Activated CD4-positive, alpha-beta memory T cell treated with anti-CD3 and anti-CD28 coated beads for 36 hours (primary cell): ENCODE measurements at regions of chr5 and their contacts with region 1.

Region 1: DNA sequence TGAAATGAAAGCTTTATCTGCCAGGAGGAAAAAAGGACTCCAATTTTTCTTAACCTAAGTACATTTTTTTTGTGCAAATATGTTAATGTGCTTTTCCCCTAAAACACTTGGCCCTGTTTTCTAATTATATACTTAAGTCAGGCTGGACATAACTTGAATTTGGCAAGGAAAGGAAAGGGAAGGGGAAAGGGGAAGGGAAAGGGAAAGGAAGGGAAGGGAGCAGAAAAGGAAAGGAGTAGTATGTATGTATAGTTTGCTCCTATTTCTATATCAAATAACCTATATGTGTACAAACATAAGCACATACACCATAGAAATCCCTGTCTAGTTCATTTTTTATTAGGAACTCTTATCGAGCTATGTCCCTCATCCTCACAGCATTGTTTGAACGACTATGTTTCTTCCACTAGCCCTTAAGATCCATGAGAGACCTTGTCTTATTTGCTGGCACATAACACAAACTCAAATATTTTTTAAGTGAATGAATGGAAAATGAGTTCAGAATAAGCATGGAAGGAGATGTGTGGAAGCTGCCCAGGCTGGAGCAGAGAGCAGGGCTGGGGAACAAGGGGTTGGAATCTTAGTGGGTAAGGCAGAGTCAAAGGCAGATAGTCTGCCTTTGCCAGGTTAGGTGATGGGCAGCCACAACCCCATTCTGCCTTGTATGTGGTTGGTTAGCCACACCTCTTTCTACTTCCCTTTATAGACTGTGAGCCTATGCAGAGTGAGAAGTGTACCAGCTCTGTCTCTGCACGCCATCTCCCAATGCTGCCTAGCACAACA is 70.0 kb downstream of the KLHL3 start:
- DNase-seq: peak; percentile 66
- H3K4me3 Mint-ChIP-seq: no peak overlapping the region
- H3K27ac Mint-ChIP-seq: peak overlapping the region; percentile 77
- H3K4me1 Mint-ChIP-seq: peaks cover 17% of the 10 kb centered on the region
- H3K27me3 Mint-ChIP-seq: no peaks in the 10 kb centered on the region

Region 2: DNA sequence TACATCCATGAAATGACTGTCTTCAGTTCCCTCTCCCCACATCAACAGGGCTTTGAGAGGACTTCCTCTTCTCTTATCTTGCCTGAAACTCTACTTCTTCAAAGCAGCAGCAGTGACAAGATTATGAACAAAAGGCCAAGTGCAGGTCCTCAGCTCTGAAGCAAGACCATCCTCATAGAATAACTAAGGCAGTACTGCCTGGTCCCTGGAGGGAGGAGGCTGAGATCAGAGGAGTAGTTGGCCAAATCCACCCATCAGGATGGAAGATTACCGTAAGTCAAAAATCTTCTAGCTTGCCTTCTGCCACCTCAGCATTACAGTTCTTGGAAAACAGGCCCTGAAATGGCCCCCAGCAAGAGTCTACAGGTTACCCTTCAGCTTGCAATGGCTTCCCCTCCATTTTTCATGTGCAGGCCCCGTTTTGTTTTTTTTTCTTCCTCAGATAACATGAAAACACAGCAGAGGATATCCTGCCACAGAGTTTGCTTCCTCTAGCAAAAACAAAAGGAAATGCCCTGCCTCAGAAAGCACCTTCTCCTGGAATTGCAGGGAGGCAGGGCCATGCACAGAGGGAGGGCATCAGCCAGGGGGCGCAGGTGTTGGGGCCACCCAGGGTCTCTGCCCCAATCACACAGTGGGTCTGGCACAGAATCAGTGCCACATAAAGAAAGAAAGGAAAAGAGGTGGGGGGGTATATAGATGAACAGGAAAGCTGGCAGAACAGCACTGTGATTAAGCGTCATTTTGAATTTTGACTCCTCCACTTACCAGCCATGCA is 30.0 kb after region 1 on chr5:
- CTCF ChIA-PET with region 1: interaction called, 29 read pairs
- POLR2A ChIA-PET with region 1: interaction called, 4 read pairs
- intact Hi-C with region 1: loop called (anchors 1 kb)
- DNase-seq: peak; percentile 29
- H3K4me3 Mint-ChIP-seq: peak overlapping the region; percentile 42
- H3K27ac Mint-ChIP-seq: peak overlapping the region; percentile 86
- H3K4me1 Mint-ChIP-seq: peaks cover 41% of the 10 kb centered on the region
- H3K27me3 Mint-ChIP-seq: no peaks in the 10 kb centered on the region

Region 3: DNA sequence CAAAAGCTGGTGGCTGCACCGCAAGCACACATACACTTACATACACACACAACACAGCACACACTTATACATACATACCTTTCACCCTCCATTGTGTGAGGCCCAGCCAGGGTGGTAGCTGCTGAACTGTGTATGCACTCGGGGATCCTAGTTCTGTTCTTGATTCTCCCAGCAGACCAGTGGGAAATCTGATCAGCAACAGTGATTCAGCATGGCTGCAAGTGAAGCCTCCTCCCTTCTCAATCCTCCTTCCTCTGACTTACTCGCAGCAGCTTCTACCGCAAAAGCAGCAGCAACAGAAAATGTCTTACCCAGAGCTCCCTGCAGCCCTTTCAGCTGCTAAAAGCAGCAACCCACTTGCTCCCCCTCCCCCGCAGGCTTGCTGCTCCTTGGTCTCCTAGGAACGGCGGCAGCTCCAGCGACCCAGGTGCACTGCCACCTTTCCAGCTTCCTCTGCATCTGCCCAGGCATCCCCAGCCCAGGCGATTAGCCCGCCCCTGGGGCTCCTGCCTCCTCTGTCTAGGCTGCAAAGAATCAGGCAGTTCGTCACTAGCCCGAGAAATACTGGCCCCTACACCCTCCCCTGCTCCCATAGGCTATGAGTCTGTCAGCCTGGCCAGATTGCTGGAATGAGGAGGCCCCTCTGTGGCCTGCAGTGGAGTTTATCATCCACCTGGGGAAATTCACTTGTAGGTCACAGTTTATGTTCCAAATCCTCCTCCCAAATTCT is 69.9 kb after region 1 on chr5 and contains the start of gene KLHL3:
- CTCF ChIA-PET with region 1: interaction called, 369 read pairs
- POLR2A ChIA-PET with region 1: interaction called, 5 read pairs
- intact Hi-C with region 1: no loop called
- DNase-seq: peak; percentile 50
- H3K4me3 Mint-ChIP-seq: no peak within 1 kb of the TSS
- H3K27ac Mint-ChIP-seq: no peak within 1 kb of the TSS
- H3K4me1 Mint-ChIP-seq: peaks cover 31% of the 10 kb centered on the region
- H3K27me3 Mint-ChIP-seq: no peaks in the 10 kb centered on the region
- total RNA-seq, gene KLHL3: 3.0 to 3.4 TPM

Region 4: DNA sequence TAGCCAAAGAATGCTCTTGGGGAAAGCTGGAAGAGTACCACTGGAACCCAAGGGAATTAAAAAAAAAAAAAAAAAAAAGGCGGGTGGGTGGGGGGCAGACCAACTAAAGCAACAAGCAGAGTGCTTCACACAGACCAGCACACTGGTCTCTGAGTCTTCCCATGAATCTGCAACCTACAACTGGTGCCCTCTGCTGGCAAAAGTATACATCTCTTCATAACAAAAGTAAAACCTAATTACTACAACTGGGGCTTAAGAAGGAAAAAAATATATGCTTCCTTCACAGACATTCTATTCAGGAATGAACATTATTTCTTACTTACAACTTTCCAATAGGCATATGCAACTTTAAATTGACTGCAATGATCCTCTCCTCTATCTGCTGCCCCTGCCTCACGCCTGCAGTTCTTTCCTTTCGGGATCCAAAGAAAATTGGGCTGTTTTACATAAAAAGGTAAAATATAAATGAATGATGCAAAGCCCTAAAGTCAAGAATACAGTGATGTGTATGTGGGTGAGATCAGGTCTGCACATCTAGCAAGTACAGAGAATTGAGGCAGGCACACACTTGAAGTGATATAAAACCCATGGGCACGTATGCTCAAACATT is 77.3 kb after region 1 on chr5:
- CTCF ChIA-PET with region 1: interaction called, 369 read pairs
- POLR2A ChIA-PET with region 1: interaction called, 7 read pairs
- intact Hi-C with region 1: no loop called
- DNase-seq: peak; percentile 57
- H3K4me3 Mint-ChIP-seq: no peak overlapping the region
- H3K27ac Mint-ChIP-seq: no peak overlapping the region
- H3K4me1 Mint-ChIP-seq: peaks cover 7% of the 10 kb centered on the region
- H3K27me3 Mint-ChIP-seq: no peaks in the 10 kb centered on the region

Region 5: DNA sequence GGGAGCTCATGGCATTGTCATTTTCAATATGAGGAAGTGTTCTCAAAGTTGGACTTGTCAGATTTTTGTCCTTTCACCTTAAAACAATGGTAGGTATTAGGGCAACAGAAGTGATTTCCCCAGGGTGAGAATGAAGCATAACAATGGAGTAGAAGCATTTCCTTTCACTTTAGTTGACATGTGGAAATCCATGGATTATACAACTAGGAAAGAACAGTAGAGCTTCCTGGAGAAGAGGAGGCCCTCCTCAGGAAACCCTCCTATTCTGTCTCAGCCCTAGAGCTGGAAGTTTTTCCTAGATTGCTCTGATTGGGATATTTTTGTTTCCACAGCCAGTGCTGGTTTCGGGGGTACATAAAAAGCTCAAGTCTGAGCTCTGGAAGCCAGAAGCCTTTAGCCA is 759.2 kb after region 1 on chr5:
- CTCF ChIA-PET with region 1: no interaction called
- POLR2A ChIA-PET with region 1: no interaction called
- intact Hi-C with region 1: no loop called
- DNase-seq: no peak
- H3K4me3 Mint-ChIP-seq: no peak overlapping the region
- H3K27ac Mint-ChIP-seq: no peak overlapping the region
- H3K4me1 Mint-ChIP-seq: no peaks in the 10 kb centered on the region
- H3K27me3 Mint-ChIP-seq: no peaks in the 10 kb centered on the region